ENCODE measurements at regions of chr10 and their contacts with region 1.

Region 1: DNA sequence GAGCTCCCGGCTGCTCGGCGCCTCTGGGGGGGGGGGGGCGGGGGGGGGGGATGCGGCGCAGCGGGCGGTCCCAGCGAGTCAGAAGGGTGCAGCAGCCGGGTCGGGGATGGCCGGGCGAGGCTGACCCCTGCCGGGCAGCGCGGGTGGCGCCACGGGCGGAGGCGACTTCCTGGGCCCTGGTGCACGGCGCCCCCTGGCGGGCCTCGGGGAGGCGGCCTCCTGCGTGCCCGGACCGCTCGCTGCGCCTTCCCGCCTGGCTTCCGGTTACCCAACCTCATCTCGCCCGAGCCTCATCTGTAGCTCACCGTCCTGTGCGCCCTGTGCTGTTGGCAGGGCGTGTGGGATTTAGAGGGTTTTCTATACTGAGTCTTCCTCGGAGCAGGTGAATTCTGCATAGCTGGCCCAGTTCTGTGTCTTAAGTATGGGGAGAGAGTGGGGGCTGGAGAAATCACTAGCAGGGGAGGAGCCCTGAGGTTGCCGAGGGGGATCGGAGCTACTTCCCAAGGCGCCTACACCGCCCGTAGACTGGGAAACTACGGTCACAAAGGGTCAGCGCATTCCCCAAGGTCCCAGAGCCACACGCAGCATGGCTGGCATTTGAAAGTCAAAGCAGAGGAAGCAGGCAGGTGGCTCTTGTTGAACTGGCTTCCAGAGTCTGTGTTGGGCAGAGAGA is 28.3 kb upstream of the WDFY4 start:
- DNase-seq: peak; percentile 69
- ATAC-seq: peak; percentile 87
- H3K4me3 ChIP-seq: peak overlapping the region; percentile 54 to 69
- H3K27ac ChIP-seq: peak overlapping the region; percentile 77; the same call in 1 of the 2 replicates
- H3K4me1 ChIP-seq: peaks cover 0 to 22% of the 10 kb centered on the region in 2 experiments; a peak in 2 of 4 replicates
- H3K27me3 ChIP-seq: peaks cover 14% of the 10 kb centered on the region
- CTCF ChIP-seq: peak; percentile 86 to 98 (median 93)
- POLR2A ChIP-seq: no peak
- RAD21 ChIP-seq: peak; percentile 87

Region 2: GRCh38 chr10:48506147-48506917 is 150.0 kb before region 1 on chr10:
- CTCF ChIA-PET with region 1: interaction called, 12 read pairs
- POLR2A ChIA-PET with region 1: no interaction called
- RAD21 ChIA-PET with region 1: no interaction called
- intact Hi-C with region 1: no loop called
- DNase-seq: peak; percentile 68
- ATAC-seq: peak; percentile 96
- H3K4me3 ChIP-seq: no peak overlapping the region
- H3K27ac ChIP-seq: no peak overlapping the region
- H3K4me1 ChIP-seq: peaks cover 5 to 15% of the 10 kb centered on the region in 2 experiments; a peak in 3 of 4 replicates
- H3K27me3 ChIP-seq: no peaks in the 10 kb centered on the region
- CTCF ChIP-seq: peak; percentile 68 to 98 (median 70)
- POLR2A ChIP-seq: no peak
- RAD21 ChIP-seq: peak; percentile 85

Region 3: DNA sequence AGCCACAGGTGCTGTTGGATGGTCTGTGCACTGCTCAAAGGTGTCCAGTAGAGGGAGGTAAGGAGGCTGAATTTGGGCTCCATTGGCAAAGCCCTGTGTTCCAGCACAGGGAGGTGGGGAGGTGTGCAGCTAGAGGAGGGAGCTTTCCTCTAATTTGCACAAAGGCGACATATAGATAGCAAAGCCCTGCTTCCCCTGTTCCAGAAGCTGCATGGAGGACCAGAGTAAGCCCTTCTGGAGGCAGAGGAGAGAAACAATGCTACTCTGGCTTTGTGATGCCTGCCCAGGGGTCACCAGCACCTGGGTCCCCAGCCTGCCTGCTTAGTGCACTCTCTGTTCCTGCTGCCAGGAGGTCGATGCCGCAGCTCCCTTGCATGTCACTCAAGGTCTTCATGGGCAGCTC is 48.1 kb before region 1 on chr10:
- CTCF ChIA-PET with region 1: interaction called, 64 read pairs
- POLR2A ChIA-PET with region 1: interaction called, 5 read pairs
- RAD21 ChIA-PET with region 1: interaction called, 3 to 4 read pairs
- intact Hi-C with region 1: loop called (anchors 10 kb)
- DNase-seq: peak; percentile 34
- ATAC-seq: peak; percentile 79
- H3K4me3 ChIP-seq: no peak overlapping the region
- H3K27ac ChIP-seq: no peak overlapping the region
- H3K4me1 ChIP-seq: peaks cover 6 to 31% of the 10 kb centered on the region in 2 experiments
- H3K27me3 ChIP-seq: no peaks in the 10 kb centered on the region
- CTCF ChIP-seq: peak; percentile 63 to 93 (median 79)
- POLR2A ChIP-seq: no peak
- RAD21 ChIP-seq: peak; percentile 40; the same call in 1 of the 2 replicates

Region 4: DNA sequence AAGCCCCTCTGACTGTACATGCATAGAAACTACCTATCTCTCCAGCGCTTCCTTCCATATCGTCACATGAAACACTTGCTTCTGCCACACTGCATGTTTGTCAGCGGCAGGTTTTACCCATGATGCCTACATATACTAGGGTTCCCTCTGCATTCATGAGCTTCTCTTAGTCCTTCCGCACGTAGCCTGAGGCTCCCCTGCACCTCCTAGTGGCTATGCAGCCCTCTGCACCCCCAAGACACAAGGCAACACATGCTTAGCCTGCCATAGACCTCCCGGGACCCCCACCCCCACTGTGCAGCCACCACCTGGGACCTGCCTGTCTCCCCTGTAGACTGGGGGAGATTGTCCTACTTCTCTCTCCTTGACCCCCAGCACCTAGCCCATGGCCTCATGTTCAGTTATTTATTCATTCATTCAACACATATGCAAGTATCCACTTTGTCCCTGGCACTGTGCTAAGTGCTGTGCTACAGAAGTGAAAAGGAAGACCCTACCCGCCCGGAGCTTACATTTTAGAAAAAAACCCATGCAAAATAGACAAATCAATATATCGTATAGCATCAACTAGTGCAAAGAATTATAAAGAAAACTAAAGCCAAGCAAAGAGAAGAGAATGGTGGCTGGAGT is 508.3 kb after region 1 on chr10:
- CTCF ChIA-PET with region 1: interaction called, 16 read pairs
- POLR2A ChIA-PET with region 1: no interaction called
- RAD21 ChIA-PET with region 1: interaction called in 1 of 2 experiments, 3 read pairs
- intact Hi-C with region 1: loop called (anchors 5 kb)
- DNase-seq: peak; percentile 48
- ATAC-seq: peak; percentile 96
- H3K4me3 ChIP-seq: no peak overlapping the region
- H3K27ac ChIP-seq: no peak overlapping the region
- H3K4me1 ChIP-seq: peaks cover 2 to 4% of the 10 kb centered on the region in 2 experiments; a peak in 1 of 4 replicates
- H3K27me3 ChIP-seq: peaks cover 24% of the 10 kb centered on the region; the same call in 1 of the 2 replicates
- CTCF ChIP-seq: peak; percentile 42 to 86 (median 78); a peak in 5 of 6 replicates
- POLR2A ChIP-seq: no peak
- RAD21 ChIP-seq: peak; percentile 65

Region 5: DNA sequence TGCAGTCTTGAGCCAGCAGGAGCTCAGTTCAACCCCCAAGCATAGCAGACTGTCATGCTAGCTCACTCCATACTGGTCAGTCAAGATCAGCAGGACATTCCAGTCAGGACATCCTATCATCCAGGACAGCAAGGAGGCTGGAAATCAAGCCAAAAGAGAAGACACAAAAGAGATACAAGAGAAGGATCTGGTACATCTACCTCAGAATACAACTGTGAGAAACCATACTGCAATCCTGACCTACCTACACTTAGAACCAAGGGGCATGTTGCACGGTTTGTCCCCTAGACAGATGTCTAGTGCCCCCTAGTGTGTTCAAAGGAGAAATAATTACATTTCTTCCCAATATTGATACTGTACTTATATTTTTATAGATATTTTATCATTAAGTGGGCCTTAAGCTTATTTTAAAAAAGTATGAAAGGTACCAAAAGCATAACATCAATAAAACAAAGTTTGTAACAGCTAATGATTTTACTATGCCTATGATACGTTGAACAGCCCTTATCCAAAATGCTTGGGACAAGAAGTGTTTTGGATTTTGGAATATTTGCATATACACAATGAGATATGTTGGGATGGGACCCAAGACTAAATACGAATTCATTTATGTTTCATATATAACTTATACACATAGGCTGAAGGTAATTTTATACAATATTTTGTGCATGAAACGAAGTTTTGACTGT is 855.9 kb after region 1 on chr10:
- CTCF ChIA-PET with region 1: interaction called, 8 read pairs
- POLR2A ChIA-PET with region 1: no interaction called
- RAD21 ChIA-PET with region 1: no interaction called
- intact Hi-C with region 1: loop called (anchors 2 kb)
- DNase-seq: peak; percentile 16
- ATAC-seq: peak; percentile 87
- H3K4me3 ChIP-seq: no peak overlapping the region
- H3K27ac ChIP-seq: no peak overlapping the region
- H3K4me1 ChIP-seq: no peaks in the 10 kb centered on the region
- H3K27me3 ChIP-seq: no peaks in the 10 kb centered on the region
- CTCF ChIP-seq: peak; percentile 58 to 79 (median 66); a peak in 5 of 6 replicates
- POLR2A ChIP-seq: no peak
- RAD21 ChIP-seq: peak; percentile 85

Measured in HCT116 (cell line).